ENCODE measurements at regions of chr4 and their contacts with region 1.

Region 1: GRCh38 chr4:88320780-88321373 is 36.5 kb upstream of the PPM1K start:
- DNase-seq: peak; percentile 82
- ATAC-seq: peak; percentile 99
- H3K4me3 ChIP-seq: peak overlapping the region in 3 of 5 experiments; percentile 35 to 64 (median 42)
- H3K4me3 Mint-ChIP-seq: peak overlapping the region; percentile 90
- H3K27ac ChIP-seq: peak overlapping the region; percentile 68 to 87
- H3K27ac Mint-ChIP-seq: peak overlapping the region; percentile 99
- H3K4me1 ChIP-seq: peaks cover 30 to 34% of the 10 kb centered on the region in 2 donors
- H3K4me1 Mint-ChIP-seq: peaks cover 29% of the 10 kb centered on the region
- H3K27me3 ChIP-seq: no peaks in the 10 kb centered on the region
- H3K27me3 Mint-ChIP-seq: no peaks in the 10 kb centered on the region
- CTCF ChIP-seq: no peak

Region 2: DNA sequence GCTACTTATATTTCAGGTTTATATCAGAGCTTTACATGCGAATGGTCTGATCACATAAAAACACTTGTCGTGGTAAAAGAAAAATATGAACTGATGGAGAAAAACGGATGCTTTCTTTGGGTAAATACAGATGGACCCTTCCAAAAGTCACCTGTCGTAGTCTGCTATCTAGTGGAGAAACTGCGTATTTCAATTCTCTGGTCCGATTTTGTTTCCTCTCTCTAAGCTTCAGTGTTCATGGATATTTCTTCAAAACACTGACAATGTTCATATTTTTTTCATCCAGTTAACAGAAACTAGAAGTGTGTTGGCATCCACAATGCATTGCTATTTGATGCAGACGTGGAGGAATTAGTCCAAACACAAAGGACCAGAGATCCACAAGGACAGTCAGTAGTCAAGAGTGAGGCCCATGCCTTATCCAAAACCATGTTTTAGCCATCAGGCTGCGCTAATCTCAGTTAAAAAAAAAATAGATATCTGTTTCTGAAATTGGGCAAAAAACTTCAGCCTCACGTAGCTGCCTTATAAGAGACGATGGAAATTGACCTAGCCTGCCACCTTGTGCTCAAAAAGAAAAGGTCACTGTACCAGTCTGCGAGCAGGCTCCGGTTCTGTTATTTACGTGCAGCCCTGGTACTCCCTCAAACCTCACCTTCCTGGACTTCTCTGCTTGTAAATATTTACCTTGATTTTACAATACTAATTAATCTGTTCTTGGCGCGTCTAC is 472.1 kb before region 1 on chr4:
- CTCF ChIA-PET with region 1: no interaction called
- POLR2A ChIA-PET with region 1: no interaction called
- intact Hi-C with region 1: no loop called
- DNase-seq: peak; percentile 44
- ATAC-seq: no peak
- H3K4me3 ChIP-seq: peak overlapping the region in 4 of 5 experiments; percentile 14 to 48 (median 32)
- H3K4me3 Mint-ChIP-seq: peak overlapping the region; percentile 58
- H3K27ac ChIP-seq: no peak overlapping the region
- H3K27ac Mint-ChIP-seq: no peak overlapping the region
- H3K4me1 ChIP-seq: peaks cover 4 to 7% of the 10 kb centered on the region in 2 donors
- H3K4me1 Mint-ChIP-seq: peaks cover 7% of the 10 kb centered on the region
- H3K27me3 ChIP-seq: peaks cover 0 to 3% (median 0%) of the 10 kb centered on the region in 4 experiments
- H3K27me3 Mint-ChIP-seq: peaks cover 12% of the 10 kb centered on the region
- CTCF ChIP-seq: peak; percentile 66

Region 3: GRCh38 chr4:88275516-88275915 is 45.4 kb before region 1 on chr4:
- CTCF ChIA-PET with region 1: interaction called, 7 read pairs
- POLR2A ChIA-PET with region 1: interaction called, 3 read pairs
- intact Hi-C with region 1: loop called (anchors 2 kb)
- DNase-seq: peak; percentile 72
- ATAC-seq: peak; percentile 91
- H3K4me3 ChIP-seq: peak overlapping the region in 3 of 5 experiments; percentile 1 to 45 (median 13)
- H3K4me3 Mint-ChIP-seq: peak overlapping the region; percentile 80
- H3K27ac ChIP-seq: peak overlapping the region; percentile 22 to 52
- H3K27ac Mint-ChIP-seq: peak overlapping the region; percentile 82
- H3K4me1 ChIP-seq: peaks cover 59 to 65% of the 10 kb centered on the region in 2 donors
- H3K4me1 Mint-ChIP-seq: peaks cover 68% of the 10 kb centered on the region
- H3K27me3 ChIP-seq: no peaks in the 10 kb centered on the region
- H3K27me3 Mint-ChIP-seq: no peaks in the 10 kb centered on the region
- CTCF ChIP-seq: no peak

Region 4: DNA sequence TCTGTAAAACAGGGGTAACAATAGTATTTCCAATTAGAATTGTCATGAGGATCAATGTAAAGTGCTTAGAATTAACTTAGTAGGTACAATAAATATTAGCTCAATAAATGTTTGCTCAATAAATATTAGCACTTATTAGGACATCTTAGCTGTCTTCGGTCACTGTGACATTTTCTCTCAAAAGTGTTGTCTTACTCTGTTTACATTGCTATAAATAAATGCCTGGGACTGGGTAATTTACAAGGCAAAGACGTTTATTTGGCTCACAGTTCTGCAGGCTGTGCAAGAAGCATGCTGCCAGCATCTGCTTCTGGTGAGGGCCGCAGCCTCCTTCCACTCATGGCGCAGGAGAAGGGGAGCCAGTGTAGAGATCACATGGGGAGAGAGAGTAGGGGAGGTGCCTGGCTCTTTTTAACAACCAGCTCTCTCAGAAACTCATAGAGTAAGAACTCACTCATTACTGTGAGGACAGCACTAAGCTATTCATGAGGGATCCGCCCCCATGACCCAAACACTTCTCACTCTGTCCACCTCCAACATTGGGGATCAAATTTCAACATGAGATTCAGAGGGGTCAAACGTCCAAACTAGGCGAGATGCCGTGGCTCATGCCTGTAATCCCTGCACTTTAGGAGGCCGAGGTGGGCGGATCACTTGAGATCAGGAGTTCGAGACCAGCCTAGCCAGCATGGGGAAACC is 14.2 kb after region 1 on chr4:
- CTCF ChIA-PET with region 1: interaction called, 3 read pairs
- POLR2A ChIA-PET with region 1: no interaction called
- intact Hi-C with region 1: loop called (anchors 2 kb)
- DNase-seq: no peak
- ATAC-seq: no peak
- H3K4me3 ChIP-seq: no peak overlapping the region
- H3K4me3 Mint-ChIP-seq: no peak overlapping the region
- H3K27ac ChIP-seq: no peak overlapping the region
- H3K27ac Mint-ChIP-seq: no peak overlapping the region
- H3K4me1 ChIP-seq: peaks cover 0 to 5% of the 10 kb centered on the region in 2 donors
- H3K4me1 Mint-ChIP-seq: peaks cover 4% of the 10 kb centered on the region
- H3K27me3 ChIP-seq: no peaks in the 10 kb centered on the region
- H3K27me3 Mint-ChIP-seq: no peaks in the 10 kb centered on the region
- CTCF ChIP-seq: no peak

Region 5: GRCh38 chr4:88456757-88457306 is 136.0 kb after region 1 on chr4 and contains the start of gene HERC5:
- CTCF ChIA-PET with region 1: interaction called, 4 read pairs
- POLR2A ChIA-PET with region 1: interaction called, 5 read pairs
- intact Hi-C with region 1: loop called (anchors 1 kb)
- DNase-seq: peak; percentile 96
- ATAC-seq: peak; percentile 94
- H3K4me3 ChIP-seq: peak within 1 kb of the TSS; percentile 69 to 93 (median 85)
- H3K4me3 Mint-ChIP-seq: peak within 1 kb of the TSS; percentile 100
- H3K27ac ChIP-seq: peak within 1 kb of the TSS; percentile 52 to 70
- H3K27ac Mint-ChIP-seq: peak within 1 kb of the TSS; percentile 99
- H3K4me1 ChIP-seq: peaks cover 11 to 16% of the 10 kb centered on the region in 2 donors
- H3K4me1 Mint-ChIP-seq: peaks cover 19% of the 10 kb centered on the region
- H3K27me3 ChIP-seq: no peaks in the 10 kb centered on the region
- H3K27me3 Mint-ChIP-seq: no peaks in the 10 kb centered on the region
- CTCF ChIP-seq: no peak
- total RNA-seq, gene HERC5: 10.6 and 12.0 TPM in 2 replicates